H1 (cell line): ENCODE measurements at regions of chr3 and their contacts with region 1.

Region 1: DNA sequence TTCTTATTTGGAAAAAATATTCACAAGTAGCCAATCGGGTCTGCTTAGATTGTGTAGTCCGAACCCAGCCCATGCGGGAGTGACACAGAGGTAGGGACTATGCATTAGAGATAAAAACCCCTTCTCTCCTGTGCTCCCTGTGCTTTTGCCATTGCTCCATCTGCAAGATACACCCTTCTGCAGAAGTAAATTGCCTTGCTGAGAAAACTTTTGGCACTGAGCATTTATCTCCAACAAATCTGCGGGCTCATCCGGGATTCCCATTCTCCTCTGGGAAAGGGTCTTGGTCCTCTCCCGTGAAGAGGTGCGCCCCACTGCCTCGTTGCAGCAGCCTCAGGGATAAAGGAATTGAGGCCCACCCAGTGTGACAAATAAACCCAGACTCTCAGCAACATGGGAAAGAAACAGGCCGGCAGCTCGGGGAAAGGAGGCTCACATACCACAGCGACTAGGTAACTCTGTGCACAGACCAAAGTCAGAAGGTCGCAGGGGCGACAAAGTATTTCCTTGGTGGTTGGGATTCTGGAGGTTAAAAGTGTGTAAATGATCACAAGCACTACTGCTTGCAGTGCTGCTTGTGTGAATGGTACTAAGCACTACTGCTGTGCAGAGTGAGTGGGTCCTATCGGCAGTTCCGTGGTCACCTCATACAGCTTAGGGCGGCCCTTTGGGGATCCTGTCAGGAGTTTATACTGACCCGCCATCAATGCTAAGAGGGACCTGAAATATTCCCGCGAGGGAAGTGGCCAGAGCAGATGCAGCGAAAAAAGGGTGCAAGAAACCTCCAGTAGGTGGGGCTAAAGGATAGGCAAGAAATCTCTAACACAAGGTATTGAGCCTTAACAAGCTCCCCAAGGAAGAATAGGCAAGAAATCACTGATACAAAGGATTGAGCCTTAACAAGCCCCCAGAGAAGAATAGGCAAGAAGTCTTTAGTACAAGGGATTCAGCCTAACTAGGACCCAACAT is 54.3 kb downstream of the GSK3B start:
- DNase-seq: peak; percentile 13 to 72
- H3K4me3 ChIP-seq: no peak overlapping the region; a peak in 1 of 8 replicates
- H3K27ac ChIP-seq: no peak overlapping the region
- H3K4me1 ChIP-seq: peaks cover 0 to 11% (median 8%) of the 10 kb centered on the region in 4 experiments; a peak in 6 of 7 replicates
- H3K27me3 ChIP-seq: no peaks in the 10 kb centered on the region
- CTCF ChIP-seq: peak; percentile 39 to 80 (median 72)
- EP300 ChIP-seq: no peak
- POLR2A ChIP-seq: no peak
- RAD21 ChIP-seq: peak; percentile 92 to 93

Region 2: DNA sequence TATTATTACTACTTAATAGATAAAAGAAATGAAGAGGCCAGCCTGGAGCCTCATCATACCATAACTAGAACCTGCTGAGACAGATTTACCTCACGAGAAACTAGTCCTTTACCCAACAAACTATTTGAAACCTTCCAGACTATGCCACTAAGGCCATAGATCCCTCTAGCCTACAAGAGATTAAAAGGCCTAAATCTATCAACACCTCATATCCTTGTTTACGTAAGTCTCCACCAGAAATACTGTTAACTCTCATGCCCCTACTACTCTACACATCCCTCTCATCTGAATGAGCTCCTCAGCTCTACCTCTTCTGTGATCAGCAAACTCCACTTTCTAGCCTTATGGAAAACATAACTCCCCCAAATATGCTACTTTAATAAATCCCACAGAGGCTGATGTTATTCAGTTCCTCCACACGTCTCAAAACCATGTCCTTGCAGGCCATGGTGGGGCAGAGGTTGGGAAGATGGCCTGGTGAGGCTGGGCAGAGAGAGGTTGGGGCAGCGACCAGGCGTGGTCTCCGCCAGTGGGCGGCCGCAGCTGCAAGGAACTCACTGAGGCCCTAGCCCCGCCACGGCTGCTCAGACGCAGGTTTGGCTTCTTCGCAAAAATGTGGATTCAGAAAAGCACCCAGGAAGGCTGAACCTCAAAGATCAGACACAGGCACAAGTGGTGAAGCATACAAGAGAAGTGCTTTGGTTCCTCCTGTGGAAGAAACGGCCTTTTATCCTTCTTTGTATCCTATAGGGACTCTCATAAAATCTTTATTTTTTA is 11.5 kb before region 1 on chr3:
- CTCF ChIA-PET with region 1: interaction called, 12 read pairs
- POLR2A ChIA-PET with region 1: interaction called, 3 read pairs
- DNase-seq: no peak
- H3K4me3 ChIP-seq: no peak overlapping the region
- H3K27ac ChIP-seq: no peak overlapping the region
- H3K4me1 ChIP-seq: peaks cover 0 to 3% (median 0%) of the 10 kb centered on the region in 4 experiments; a peak in 2 of 7 replicates
- H3K27me3 ChIP-seq: no peaks in the 10 kb centered on the region
- CTCF ChIP-seq: no peak
- EP300 ChIP-seq: no peak
- POLR2A ChIP-seq: no peak
- RAD21 ChIP-seq: no peak

Region 3: DNA sequence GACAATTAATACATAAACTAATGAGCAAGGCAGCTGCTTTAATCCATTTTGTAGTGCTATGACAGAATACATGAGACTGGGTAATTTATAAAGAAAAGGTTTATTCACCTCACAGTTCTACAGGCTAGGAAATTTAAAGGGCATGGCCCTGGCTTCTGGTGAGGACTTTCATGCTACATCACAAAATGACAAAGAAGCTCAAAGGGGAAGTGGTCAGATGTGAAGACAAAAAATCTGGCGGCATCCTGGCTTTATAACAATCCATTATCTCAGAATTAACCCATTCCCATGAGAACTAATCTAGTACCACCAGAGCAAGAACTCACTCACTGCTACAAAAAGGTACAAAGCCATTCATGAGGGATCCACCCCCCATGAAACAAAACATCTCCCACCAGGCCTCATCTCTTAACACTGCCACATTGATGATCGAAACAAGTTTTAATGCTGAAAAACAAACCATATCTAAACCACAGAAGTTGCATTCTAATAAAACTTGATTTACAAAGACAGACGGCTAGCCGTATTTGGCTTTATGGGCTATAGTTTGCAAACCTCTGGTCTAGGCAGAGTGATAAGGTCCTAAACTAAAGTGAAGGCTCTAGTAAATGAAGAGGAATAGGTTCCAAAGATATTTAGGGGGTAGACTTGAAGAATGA is 10.1 kb after region 1 on chr3:
- CTCF ChIA-PET with region 1: interaction called, 13 read pairs
- POLR2A ChIA-PET with region 1: interaction called, 4 read pairs
- DNase-seq: no peak
- H3K4me3 ChIP-seq: no peak overlapping the region
- H3K27ac ChIP-seq: no peak overlapping the region
- H3K4me1 ChIP-seq: no peaks in the 10 kb centered on the region
- H3K27me3 ChIP-seq: no peaks in the 10 kb centered on the region
- CTCF ChIP-seq: no peak
- EP300 ChIP-seq: no peak
- POLR2A ChIP-seq: no peak
- RAD21 ChIP-seq: no peak

Region 4: DNA sequence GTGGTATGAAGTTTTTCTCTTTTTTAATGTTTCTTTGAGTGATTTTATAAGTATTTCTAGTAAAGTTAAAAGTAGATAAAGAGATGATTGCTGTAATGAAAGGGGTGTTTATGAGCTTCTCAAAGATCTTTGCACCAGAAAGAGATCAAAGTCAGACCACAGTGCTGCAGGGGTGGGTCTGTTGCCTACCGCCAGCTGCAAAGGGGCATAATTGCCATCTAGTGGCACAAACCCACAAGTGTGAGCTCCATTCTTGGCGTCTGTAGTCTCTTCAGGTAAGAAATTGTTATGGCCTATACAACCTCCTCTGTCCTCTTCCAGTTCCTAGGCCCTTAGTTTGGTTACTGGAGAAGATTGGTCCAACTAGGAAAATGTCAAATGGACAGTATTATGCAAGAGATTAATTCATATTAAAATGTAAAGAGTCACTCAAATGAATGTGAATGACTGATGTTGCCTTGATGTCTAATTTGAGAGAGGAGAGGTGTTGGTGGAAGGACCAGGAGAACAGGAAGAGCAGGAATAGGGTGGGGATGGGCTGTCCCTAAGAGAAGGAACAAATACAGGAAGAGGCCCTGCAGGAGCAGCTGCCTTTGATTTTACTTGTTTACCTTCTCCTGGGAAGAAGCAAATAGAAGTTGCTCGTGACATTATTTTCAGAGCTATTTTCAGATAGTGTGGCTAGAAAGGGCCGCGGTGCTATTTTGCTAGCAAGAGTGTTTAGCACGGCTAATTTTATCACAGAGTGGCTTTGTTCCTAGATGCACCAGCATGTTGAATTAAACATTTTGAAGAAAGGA is 107.3 kb after region 1 on chr3:
- CTCF ChIA-PET with region 1: interaction called, 23 read pairs
- POLR2A ChIA-PET with region 1: no interaction called
- DNase-seq: no peak
- H3K4me3 ChIP-seq: no peak overlapping the region
- H3K27ac ChIP-seq: no peak overlapping the region
- H3K4me1 ChIP-seq: peaks cover 0 to 4% (median 2%) of the 10 kb centered on the region in 4 experiments; a peak in 3 of 7 replicates
- H3K27me3 ChIP-seq: no peaks in the 10 kb centered on the region
- CTCF ChIP-seq: peak; percentile 55 to 68 (median 65)
- EP300 ChIP-seq: no peak
- POLR2A ChIP-seq: no peak
- RAD21 ChIP-seq: peak; percentile 81 to 85

Region 5: DNA sequence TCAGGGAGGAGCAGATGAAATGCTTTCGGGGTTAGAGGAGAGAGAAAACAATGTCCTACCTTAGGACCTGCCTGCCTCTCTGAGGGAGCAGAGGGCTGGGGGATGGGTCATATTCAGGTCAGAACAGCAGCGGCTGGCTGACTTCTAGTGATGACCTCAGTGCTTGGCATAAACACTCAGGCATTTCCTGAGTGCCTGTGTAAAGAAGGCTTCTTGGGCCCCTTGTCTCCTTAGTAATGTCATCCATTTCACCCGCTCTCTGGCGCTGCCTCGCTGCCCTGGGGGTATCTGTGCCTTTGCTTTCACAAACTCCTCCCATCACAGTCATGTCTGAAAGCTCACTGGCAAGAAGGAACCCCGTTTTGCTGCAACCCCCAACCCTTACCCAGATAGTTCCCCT is 137.2 kb after region 1 on chr3:
- CTCF ChIA-PET with region 1: interaction called, 10 read pairs
- POLR2A ChIA-PET with region 1: no interaction called
- DNase-seq: peak in 1 of 2 experiments; percentile 39
- H3K4me3 ChIP-seq: no peak overlapping the region
- H3K27ac ChIP-seq: no peak overlapping the region
- H3K4me1 ChIP-seq: no peaks in the 10 kb centered on the region; a peak in 1 of 7 replicates
- H3K27me3 ChIP-seq: no peaks in the 10 kb centered on the region
- CTCF ChIP-seq: no peak
- EP300 ChIP-seq: no peak
- POLR2A ChIP-seq: no peak
- RAD21 ChIP-seq: no peak